ENCODE measurements at regions of chr9 and their contacts with region 1.

Region 1: GRCh38 chr9:94681508-94681907 is 42.2 kb upstream of the FBP1 start:
- DNase-seq: peak; percentile 83
- ATAC-seq: peak; percentile 99
- H3K4me3 ChIP-seq: no peak overlapping the region
- H3K27ac ChIP-seq: peak overlapping the region; percentile 12
- H3K4me1 ChIP-seq: peaks cover 4% of the 10 kb centered on the region
- H3K27me3 ChIP-seq: no peaks in the 10 kb centered on the region
- CTCF ChIP-seq: peak; percentile 74

Region 2: GRCh38 chr9:94772639-94773303 is 91.3 kb after region 1 on chr9:
- intact Hi-C with region 1: loop called (anchors 10 kb)
- DNase-seq: no peak
- ATAC-seq: no peak
- H3K4me3 ChIP-seq: no peak overlapping the region
- H3K27ac ChIP-seq: no peak overlapping the region
- H3K4me1 ChIP-seq: no peaks in the 10 kb centered on the region
- H3K27me3 ChIP-seq: no peaks in the 10 kb centered on the region
- CTCF ChIP-seq: no peak

Region 3: DNA sequence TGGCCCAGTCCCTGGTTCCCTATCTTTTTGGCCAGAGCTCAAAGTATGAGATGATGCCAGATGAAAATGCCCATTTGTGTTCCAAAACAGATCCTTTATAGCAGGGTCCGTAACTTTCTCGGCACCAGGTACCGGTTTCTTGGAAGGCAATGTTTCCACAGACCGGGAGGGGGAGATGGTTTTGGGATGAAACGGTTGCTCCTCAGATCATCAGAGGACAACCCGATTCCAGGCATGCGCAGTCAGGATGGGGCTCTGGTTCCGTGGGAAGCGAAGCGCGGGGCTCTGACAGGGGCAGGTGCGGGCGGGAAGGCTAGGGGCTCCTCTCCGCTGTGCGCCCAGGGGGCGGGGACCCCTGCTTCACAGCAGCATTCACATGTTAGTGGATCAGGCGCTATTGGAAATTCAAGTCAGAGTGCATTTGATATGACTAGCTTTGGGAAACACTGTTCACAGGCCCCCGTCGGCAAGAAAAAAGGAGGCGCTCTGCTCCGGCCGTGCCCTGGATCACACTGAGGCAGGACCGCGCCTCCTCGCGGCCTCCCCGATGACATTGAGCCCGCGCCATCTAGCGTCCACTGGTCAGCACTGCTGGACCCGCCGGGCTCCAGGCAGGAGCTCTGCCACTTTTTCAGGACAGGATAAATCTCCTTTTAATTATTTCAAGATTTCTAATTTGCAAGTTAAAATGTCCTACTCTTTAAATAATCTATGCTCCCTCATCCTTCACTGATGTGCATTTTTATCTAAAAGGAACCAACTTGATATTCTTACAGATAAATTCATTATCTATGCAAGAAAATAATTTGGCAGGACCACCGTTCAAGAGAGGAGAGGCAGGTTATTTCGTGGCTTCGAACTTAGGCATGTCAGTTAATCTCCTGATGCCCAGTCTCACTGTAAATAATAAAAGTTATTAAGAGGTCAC is 446.0 kb after region 1 on chr9:
- intact Hi-C with region 1: loop called (anchors 5 kb)
- DNase-seq: peak; percentile 90
- ATAC-seq: peak; percentile 94
- H3K4me3 ChIP-seq: peak overlapping the region; percentile 24
- H3K27ac ChIP-seq: no peak overlapping the region
- H3K4me1 ChIP-seq: peaks cover 15% of the 10 kb centered on the region
- H3K27me3 ChIP-seq: no peaks in the 10 kb centered on the region
- CTCF ChIP-seq: peak; percentile 98